CD4-positive, alpha-beta memory T cell (primary cell): ENCODE measurements at regions of chr19 and their contacts with region 1.

Region 1: GRCh38 chr19:55476100-55476775 is at the start of gene ZNF628:
- DNase-seq: peak; percentile 97 to 98 (median 97)
- H3K4me3 ChIP-seq: peak within 1 kb of the TSS; percentile 65 to 84
- H3K4me3 Mint-ChIP-seq: peak within 1 kb of the TSS; percentile 88 to 93 (median 90)
- H3K27ac ChIP-seq: peak within 1 kb of the TSS; percentile 71
- H3K27ac Mint-ChIP-seq: peak within 1 kb of the TSS; percentile 90 to 97 (median 94)
- H3K4me1 ChIP-seq: peaks cover 22% of the 10 kb centered on the region
- H3K4me1 Mint-ChIP-seq: peaks cover 19 to 42% (median 29%) of the 10 kb centered on the region in 4 donors
- H3K27me3 ChIP-seq: no peaks in the 10 kb centered on the region
- H3K27me3 Mint-ChIP-seq: no peaks in the 10 kb centered on the region
- total RNA-seq, gene ZNF628: 8.1 to 9.1 TPM

Region 2: GRCh38 chr19:55117636-55118391 is 358.4 kb before region 1 on chr19 and contains the start of gene PPP1R12C:
- CTCF ChIA-PET with region 1: no interaction called
- POLR2A ChIA-PET with region 1: interaction called, 10 read pairs
- intact Hi-C with region 1: loop called (anchors 1 kb)
- DNase-seq: peak; percentile 94 to 97 (median 96)
- H3K4me3 ChIP-seq: peak within 1 kb of the TSS; percentile 96 to 97
- H3K4me3 Mint-ChIP-seq: peak within 1 kb of the TSS; percentile 98 to 100 (median 99)
- H3K27ac ChIP-seq: peak within 1 kb of the TSS; percentile 73
- H3K27ac Mint-ChIP-seq: peak within 1 kb of the TSS; percentile 96 to 99 (median 98)
- H3K4me1 ChIP-seq: peaks cover 31% of the 10 kb centered on the region
- H3K4me1 Mint-ChIP-seq: peaks cover 15 to 53% (median 34%) of the 10 kb centered on the region in 4 donors
- H3K27me3 ChIP-seq: no peaks in the 10 kb centered on the region
- H3K27me3 Mint-ChIP-seq: peaks cover 3 to 6% of the 10 kb centered on the region in 2 donors
- total RNA-seq, gene PPP1R12C: 165 TPM

Region 3: GRCh38 chr19:55279770-55280643 is 196.2 kb before region 1 on chr19 and contains the start of gene HSPBP1:
- CTCF ChIA-PET with region 1: no interaction called
- POLR2A ChIA-PET with region 1: interaction called, 4 read pairs
- intact Hi-C with region 1: loop called (anchors 1 kb)
- DNase-seq: peak; percentile 96 to 97 (median 97)
- H3K4me3 ChIP-seq: peak within 1 kb of the TSS; percentile 95 to 98
- H3K4me3 Mint-ChIP-seq: peak within 1 kb of the TSS; percentile 92 to 100 (median 98)
- H3K27ac ChIP-seq: peak within 1 kb of the TSS; percentile 69
- H3K27ac Mint-ChIP-seq: peak within 1 kb of the TSS; percentile 87 to 100 (median 100)
- H3K4me1 ChIP-seq: peaks cover 39% of the 10 kb centered on the region
- H3K4me1 Mint-ChIP-seq: peaks cover 24 to 55% (median 34%) of the 10 kb centered on the region in 4 donors
- H3K27me3 ChIP-seq: no peaks in the 10 kb centered on the region
- H3K27me3 Mint-ChIP-seq: no peaks in the 10 kb centered on the region
- total RNA-seq, gene HSPBP1: 17.9 to 18.5 TPM

Region 4: DNA sequence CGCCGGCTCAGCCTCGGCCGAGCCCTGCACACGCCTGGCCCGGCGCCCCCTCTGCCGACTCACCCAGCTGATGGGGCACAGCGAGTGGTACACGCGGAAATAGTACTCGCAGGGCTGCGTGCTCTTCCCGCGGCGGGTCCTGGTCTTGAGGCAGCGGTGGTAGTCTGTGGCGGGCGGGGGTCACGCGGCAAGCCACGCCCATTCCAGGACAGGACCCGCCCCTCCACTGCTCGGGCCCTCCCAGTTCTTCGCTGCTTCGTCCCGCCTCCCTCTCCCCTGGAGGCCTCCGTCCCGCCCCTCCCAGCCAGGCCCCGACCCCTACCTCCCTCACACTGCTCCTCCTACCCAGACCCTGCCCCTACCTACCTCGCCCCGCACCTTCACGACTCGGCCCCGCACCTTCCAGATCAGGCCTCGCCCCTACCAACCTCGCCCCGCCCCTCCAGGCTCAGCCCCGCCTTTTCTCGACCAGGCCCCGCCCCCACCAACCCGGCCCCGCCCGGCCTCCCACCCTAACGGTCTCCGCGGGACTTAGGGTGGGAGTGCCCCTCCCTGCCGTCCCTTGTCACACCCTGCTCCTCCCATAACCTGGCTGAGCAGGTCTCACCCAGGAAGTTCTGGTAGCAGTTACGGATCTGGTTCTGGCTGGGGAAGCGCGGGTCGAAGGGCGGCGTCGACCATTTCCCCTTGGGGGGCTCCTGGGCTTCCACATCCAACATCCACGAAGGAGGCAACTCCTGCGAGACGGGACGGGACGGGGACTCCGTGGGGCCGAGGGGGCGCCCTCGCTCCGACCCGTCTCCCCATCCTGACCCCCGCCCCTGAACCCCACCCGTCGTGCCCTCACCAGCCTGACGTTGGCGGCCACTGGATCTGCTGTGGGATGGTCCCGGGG is 122.2 kb before region 1 on chr19:
- CTCF ChIA-PET with region 1: no interaction called
- POLR2A ChIA-PET with region 1: no interaction called
- intact Hi-C with region 1: no loop called
- DNase-seq: peak; percentile 54 to 74 (median 70)
- H3K4me3 ChIP-seq: peak overlapping the region in 1 of 2 donors; percentile 52
- H3K4me3 Mint-ChIP-seq: peak overlapping the region; percentile 69 to 84 (median 80)
- H3K27ac ChIP-seq: no peak overlapping the region
- H3K27ac Mint-ChIP-seq: peak overlapping the region in 5 of 7 donors; percentile 48 to 84 (median 57)
- H3K4me1 ChIP-seq: peaks cover 18% of the 10 kb centered on the region
- H3K4me1 Mint-ChIP-seq: peaks cover 4 to 33% (median 8%) of the 10 kb centered on the region in 4 donors
- H3K27me3 ChIP-seq: peaks cover 29% of the 10 kb centered on the region
- H3K27me3 Mint-ChIP-seq: peaks cover 30 to 47% of the 10 kb centered on the region in 2 donors

Region 5: DNA sequence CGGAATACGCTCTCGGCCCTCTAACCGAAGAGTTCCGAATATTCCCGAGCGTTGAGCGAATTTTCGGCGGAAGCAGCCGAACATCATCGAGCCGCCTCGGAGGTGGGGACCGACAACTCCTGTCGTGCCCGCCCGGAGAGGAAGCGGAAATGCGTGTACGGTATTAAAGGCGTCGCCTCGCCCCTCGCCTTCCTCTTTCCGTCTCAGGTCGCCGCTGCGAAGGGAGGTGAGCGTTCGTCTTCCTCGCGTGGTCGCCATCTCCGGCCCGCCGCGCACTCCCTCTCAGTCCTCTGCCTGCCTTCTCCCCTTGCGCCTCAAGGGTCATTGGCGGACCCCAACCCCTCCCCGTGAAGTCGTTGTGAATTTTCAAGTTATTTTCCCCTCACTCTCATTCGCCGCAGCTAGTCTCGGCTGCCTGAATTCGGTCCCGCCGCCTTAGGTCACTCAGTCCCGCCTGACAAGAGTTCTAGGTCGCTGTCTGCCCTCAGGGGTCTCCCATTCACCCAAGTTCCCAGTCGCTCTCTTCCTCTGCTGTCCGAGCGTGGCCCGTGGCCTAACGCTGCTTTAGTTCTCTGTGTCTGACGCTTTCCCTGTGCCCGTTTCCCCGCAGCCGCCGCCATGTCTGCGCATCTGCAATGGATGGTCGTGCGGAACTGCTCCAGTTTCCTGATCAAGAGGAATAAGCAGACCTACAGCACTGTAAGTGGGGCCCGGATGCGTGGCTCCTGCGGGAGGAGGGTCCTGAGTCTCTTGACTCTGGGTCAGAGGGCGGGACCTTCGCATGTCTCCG is 90.3 kb before region 1 on chr19 and contains the start of gene RPL28:
- CTCF ChIA-PET with region 1: no interaction called
- POLR2A ChIA-PET with region 1: interaction called, 14 read pairs
- intact Hi-C with region 1: no loop called
- DNase-seq: peak; percentile 98 to 100 (median 99)
- H3K4me3 ChIP-seq: peak within 1 kb of the TSS; percentile 85 to 88
- H3K4me3 Mint-ChIP-seq: peak within 1 kb of the TSS; percentile 99 to 100 (median 100)
- H3K27ac ChIP-seq: peak within 1 kb of the TSS; percentile 94
- H3K27ac Mint-ChIP-seq: peak within 1 kb of the TSS; percentile 98 to 100 (median 99)
- H3K4me1 ChIP-seq: peaks cover 68% of the 10 kb centered on the region
- H3K4me1 Mint-ChIP-seq: peaks cover 39 to 88% (median 63%) of the 10 kb centered on the region in 4 donors
- H3K27me3 ChIP-seq: no peaks in the 10 kb centered on the region
- H3K27me3 Mint-ChIP-seq: no peaks in the 10 kb centered on the region
- total RNA-seq, gene RPL28: 3,136 to 3,159 TPM

Region 6: GRCh38 chr19:55461259-55461973 is 14.8 kb before region 1 on chr19 and contains the start of gene ISOC2:
- CTCF ChIA-PET with region 1: interaction called, 29 read pairs
- POLR2A ChIA-PET with region 1: interaction called, 23 read pairs
- intact Hi-C with region 1: loop called (anchors 1 kb)
- DNase-seq: peak; percentile 100
- H3K4me3 ChIP-seq: peak within 1 kb of the TSS; percentile 82 to 97
- H3K4me3 Mint-ChIP-seq: peak within 1 kb of the TSS; percentile 86 to 97 (median 92)
- H3K27ac ChIP-seq: peak within 1 kb of the TSS; percentile 67
- H3K27ac Mint-ChIP-seq: peak within 1 kb of the TSS; percentile 72 to 97 (median 91)
- H3K4me1 ChIP-seq: peaks cover 18% of the 10 kb centered on the region
- H3K4me1 Mint-ChIP-seq: peaks cover 11 to 31% (median 21%) of the 10 kb centered on the region in 4 donors
- H3K27me3 ChIP-seq: no peaks in the 10 kb centered on the region
- H3K27me3 Mint-ChIP-seq: no peaks in the 10 kb centered on the region
- total RNA-seq, gene ISOC2: 9.9 to 13.7 TPM

Region 7: DNA sequence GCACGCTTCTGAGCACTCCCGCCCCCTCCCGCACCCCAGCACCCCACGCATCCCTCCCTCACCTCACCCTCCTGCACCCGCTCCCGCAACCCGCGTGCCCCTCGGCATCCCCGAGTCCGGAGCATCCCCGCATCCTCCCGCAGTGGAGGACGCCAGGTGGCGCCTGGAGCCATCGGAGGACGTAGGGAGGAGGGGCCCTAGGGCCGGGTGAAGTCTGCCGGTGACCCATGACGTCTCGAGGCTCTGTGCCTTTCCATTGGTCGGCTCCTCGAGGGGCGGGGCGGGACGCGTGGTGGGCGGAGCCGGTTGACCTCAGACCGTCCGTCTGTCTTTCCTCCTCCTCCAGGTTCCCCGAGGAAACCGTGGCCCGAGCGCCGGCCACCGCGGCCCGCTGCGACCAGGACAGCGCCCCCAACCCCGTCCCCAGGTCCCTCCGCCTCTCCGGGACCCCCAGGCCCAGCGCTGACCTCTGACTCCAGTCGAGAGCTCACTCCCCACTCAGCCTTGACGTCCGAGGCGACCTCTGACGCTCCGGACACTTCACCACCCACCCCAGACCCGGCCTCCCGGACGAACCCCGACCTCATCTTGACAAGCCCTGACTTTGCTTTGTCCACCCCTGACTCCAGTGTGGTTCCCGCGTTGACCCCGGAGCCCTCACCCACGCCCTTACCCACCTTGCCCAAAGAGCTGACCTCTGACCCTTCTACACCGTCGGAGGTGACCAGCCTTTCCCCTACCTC is 40.8 kb after region 1 on chr19:
- CTCF ChIA-PET with region 1: no interaction called
- POLR2A ChIA-PET with region 1: no interaction called
- intact Hi-C with region 1: no loop called
- DNase-seq: peak; percentile 85 to 86 (median 86)
- H3K4me3 ChIP-seq: peak overlapping the region in 1 of 2 donors; percentile 38
- H3K4me3 Mint-ChIP-seq: peak overlapping the region; percentile 71 to 86 (median 82)
- H3K27ac ChIP-seq: peak overlapping the region; percentile 42
- H3K27ac Mint-ChIP-seq: peak overlapping the region; percentile 77 to 97 (median 92)
- H3K4me1 ChIP-seq: peaks cover 6% of the 10 kb centered on the region
- H3K4me1 Mint-ChIP-seq: peaks cover 3 to 4% (median 3%) of the 10 kb centered on the region in 4 donors
- H3K27me3 ChIP-seq: no peaks in the 10 kb centered on the region
- H3K27me3 Mint-ChIP-seq: peaks cover 1 to 11% of the 10 kb centered on the region in 2 donors

Region 8: GRCh38 chr19:55580628-55581144 is 104.4 kb after region 1 on chr19 and contains the start of gene ZNF579:
- CTCF ChIA-PET with region 1: no interaction called
- POLR2A ChIA-PET with region 1: no interaction called
- intact Hi-C with region 1: no loop called
- DNase-seq: peak; percentile 58 to 78 (median 63)
- H3K4me3 ChIP-seq: peak within 1 kb of the TSS; percentile 61 to 68
- H3K4me3 Mint-ChIP-seq: peak within 1 kb of the TSS; percentile 81 to 97 (median 88)
- H3K27ac ChIP-seq: peak within 1 kb of the TSS; percentile 69
- H3K27ac Mint-ChIP-seq: peak within 1 kb of the TSS; percentile 86 to 95 (median 93)
- H3K4me1 ChIP-seq: peaks cover 21% of the 10 kb centered on the region
- H3K4me1 Mint-ChIP-seq: peaks cover 22 to 38% (median 25%) of the 10 kb centered on the region in 4 donors
- H3K27me3 ChIP-seq: no peaks in the 10 kb centered on the region
- H3K27me3 Mint-ChIP-seq: peaks cover 0 to 1% of the 10 kb centered on the region in 2 donors
- total RNA-seq, gene ZNF579: 8.0 to 9.6 TPM

Region 9: GRCh38 chr19:55605207-55605636 is 129.0 kb after region 1 on chr19:
- CTCF ChIA-PET with region 1: interaction called, 4 read pairs
- POLR2A ChIA-PET with region 1: interaction called, 12 read pairs
- intact Hi-C with region 1: no loop called
- DNase-seq: peak; percentile 95 to 98 (median 97)
- H3K4me3 ChIP-seq: peak overlapping the region; percentile 43 to 83
- H3K4me3 Mint-ChIP-seq: peak overlapping the region; percentile 79 to 93 (median 84)
- H3K27ac ChIP-seq: peak overlapping the region; percentile 88
- H3K27ac Mint-ChIP-seq: peak overlapping the region; percentile 83 to 97 (median 94)
- H3K4me1 ChIP-seq: peaks cover 42% of the 10 kb centered on the region
- H3K4me1 Mint-ChIP-seq: peaks cover 41 to 73% (median 48%) of the 10 kb centered on the region in 4 donors
- H3K27me3 ChIP-seq: no peaks in the 10 kb centered on the region
- H3K27me3 Mint-ChIP-seq: no peaks in the 10 kb centered on the region